CD4-positive, alpha-beta T cell (primary cell): ENCODE measurements at regions of chr10 and their contacts with region 1.

Region 1: GRCh38 chr10:6514844-6515780 is 65.0 kb downstream of the PRKCQ start:
- DNase-seq: no peak
- ATAC-seq: no peak
- H3K4me3 ChIP-seq: no peak overlapping the region
- H3K4me3 Mint-ChIP-seq: no peak overlapping the region
- H3K27ac ChIP-seq: no peak overlapping the region
- H3K27ac Mint-ChIP-seq: peak overlapping the region; percentile 76
- H3K4me1 ChIP-seq: peaks cover 52% of the 10 kb centered on the region
- H3K4me1 Mint-ChIP-seq: peaks cover 89% of the 10 kb centered on the region
- H3K27me3 ChIP-seq: no peaks in the 10 kb centered on the region
- H3K27me3 Mint-ChIP-seq: no peaks in the 10 kb centered on the region
- CTCF ChIP-seq: no peak

Region 2: DNA sequence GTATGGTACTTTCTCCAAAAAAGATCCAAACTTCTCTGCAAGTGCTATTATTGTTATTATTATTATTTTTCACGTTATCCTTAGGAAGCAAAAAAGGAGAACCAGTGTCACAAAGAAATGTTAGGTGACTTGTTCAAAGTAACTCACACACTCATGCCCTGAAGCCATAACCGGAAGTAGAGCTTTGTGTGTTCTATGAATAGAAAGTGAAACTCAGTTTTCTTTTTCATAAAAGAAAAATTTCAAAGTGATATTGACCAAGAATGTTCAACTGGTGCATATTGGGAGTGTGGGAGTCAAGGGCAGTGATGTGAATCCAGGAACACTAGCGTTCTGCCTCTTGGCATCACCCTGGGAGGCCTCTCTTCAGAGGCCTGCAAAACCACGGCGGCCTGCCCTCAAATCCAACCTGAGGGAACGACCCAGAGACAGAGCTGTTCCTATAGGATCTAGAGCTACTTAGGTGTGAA is 41.2 kb before region 1 on chr10:
- CTCF ChIA-PET with region 1: no interaction called
- POLR2A ChIA-PET with region 1: interaction called, 7 read pairs
- intact Hi-C with region 1: loop called in 1 of 2 experiments (anchors 5 kb)
- DNase-seq: peak in 6 of 14 experiments; percentile 25 to 85 (median 56)
- ATAC-seq: peak; percentile 75
- H3K4me3 ChIP-seq: peak overlapping the region; percentile 47
- H3K4me3 Mint-ChIP-seq: peak overlapping the region; percentile 83
- H3K27ac ChIP-seq: peak overlapping the region; percentile 69 to 75
- H3K27ac Mint-ChIP-seq: peak overlapping the region; percentile 95
- H3K4me1 ChIP-seq: peaks cover 23% of the 10 kb centered on the region
- H3K4me1 Mint-ChIP-seq: peaks cover 65% of the 10 kb centered on the region
- H3K27me3 ChIP-seq: no peaks in the 10 kb centered on the region
- H3K27me3 Mint-ChIP-seq: no peaks in the 10 kb centered on the region
- CTCF ChIP-seq: no peak

Region 3: GRCh38 chr10:6487920-6488319 is 27.2 kb before region 1 on chr10:
- CTCF ChIA-PET with region 1: no interaction called
- POLR2A ChIA-PET with region 1: no interaction called
- intact Hi-C with region 1: no loop called
- DNase-seq: no peak
- ATAC-seq: no peak
- H3K4me3 ChIP-seq: no peak overlapping the region
- H3K4me3 Mint-ChIP-seq: no peak overlapping the region
- H3K27ac ChIP-seq: no peak overlapping the region
- H3K27ac Mint-ChIP-seq: no peak overlapping the region
- H3K4me1 ChIP-seq: peaks cover 44% of the 10 kb centered on the region
- H3K4me1 Mint-ChIP-seq: peaks cover 33% of the 10 kb centered on the region
- H3K27me3 ChIP-seq: no peaks in the 10 kb centered on the region
- H3K27me3 Mint-ChIP-seq: no peaks in the 10 kb centered on the region
- CTCF ChIP-seq: no peak

Region 4: DNA sequence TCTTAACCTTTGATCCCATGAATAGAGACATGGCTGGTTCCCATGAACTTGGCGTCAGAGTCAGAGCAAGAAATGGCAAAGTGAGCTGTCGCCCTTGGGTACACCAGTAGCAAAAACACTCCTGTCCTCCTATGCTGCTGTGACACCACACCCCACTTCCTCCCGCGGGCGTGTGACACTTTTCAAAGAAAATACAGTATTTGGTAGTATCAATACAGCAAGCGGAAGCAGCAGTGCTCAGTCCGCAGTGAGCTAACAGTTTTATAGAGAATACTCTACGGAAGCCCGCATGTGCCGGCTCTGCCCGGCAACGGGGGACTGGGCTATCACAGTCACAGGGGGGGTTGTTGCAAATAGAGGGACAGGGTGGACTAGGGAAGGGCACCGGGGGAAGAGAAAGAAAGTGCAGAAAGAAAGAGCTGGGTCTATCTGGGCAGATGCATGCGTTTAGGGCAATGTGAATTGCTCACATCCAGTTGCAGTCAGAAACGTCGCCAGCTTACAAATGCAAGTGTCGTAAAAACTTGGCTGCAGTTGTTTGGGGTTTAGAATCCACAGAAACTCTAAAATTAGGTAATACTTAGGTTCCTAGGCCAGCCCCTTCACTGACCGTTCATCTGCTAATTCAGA is 15.2 kb after region 1 on chr10:
- CTCF ChIA-PET with region 1: interaction called, 14 read pairs
- POLR2A ChIA-PET with region 1: interaction called, 9 read pairs
- intact Hi-C with region 1: no loop called
- DNase-seq: peak; percentile 61 to 94 (median 77)
- ATAC-seq: peak; percentile 97
- H3K4me3 ChIP-seq: peak overlapping the region; percentile 48
- H3K4me3 Mint-ChIP-seq: peak overlapping the region; percentile 86
- H3K27ac ChIP-seq: peak overlapping the region; percentile 85 to 86
- H3K27ac Mint-ChIP-seq: peak overlapping the region; percentile 95
- H3K4me1 ChIP-seq: peaks cover 73% of the 10 kb centered on the region
- H3K4me1 Mint-ChIP-seq: peaks cover 85% of the 10 kb centered on the region
- H3K27me3 ChIP-seq: no peaks in the 10 kb centered on the region
- H3K27me3 Mint-ChIP-seq: no peaks in the 10 kb centered on the region
- CTCF ChIP-seq: no peak

Region 5: GRCh38 chr10:6563075-6563474 is 48.0 kb after region 1 on chr10:
- CTCF ChIA-PET with region 1: interaction called, 3 read pairs
- POLR2A ChIA-PET with region 1: interaction called, 7 read pairs
- intact Hi-C with region 1: loop called in 1 of 2 experiments (anchors 5 kb)
- DNase-seq: peak in 6 of 14 experiments; percentile 13 to 64 (median 50)
- ATAC-seq: peak; percentile 58
- H3K4me3 ChIP-seq: peak overlapping the region; percentile 21
- H3K4me3 Mint-ChIP-seq: peak overlapping the region; percentile 82
- H3K27ac ChIP-seq: peak overlapping the region; percentile 50 to 66
- H3K27ac Mint-ChIP-seq: peak overlapping the region; percentile 81
- H3K4me1 ChIP-seq: peaks cover 71% of the 10 kb centered on the region
- H3K4me1 Mint-ChIP-seq: peaks cover 90% of the 10 kb centered on the region
- H3K27me3 ChIP-seq: no peaks in the 10 kb centered on the region
- H3K27me3 Mint-ChIP-seq: no peaks in the 10 kb centered on the region
- CTCF ChIP-seq: no peak

Region 6: GRCh38 chr10:6601246-6601805 is 86.2 kb after region 1 on chr10:
- CTCF ChIA-PET with region 1: interaction called, 5 read pairs
- POLR2A ChIA-PET with region 1: interaction called, 4 read pairs
- intact Hi-C with region 1: loop called (anchors 2 to 5 kb)
- DNase-seq: peak in 8 of 14 experiments; percentile 36 to 60 (median 54)
- ATAC-seq: peak; percentile 67
- H3K4me3 ChIP-seq: no peak overlapping the region
- H3K4me3 Mint-ChIP-seq: peak overlapping the region; percentile 71
- H3K27ac ChIP-seq: no peak overlapping the region
- H3K27ac Mint-ChIP-seq: peak overlapping the region; percentile 83
- H3K4me1 ChIP-seq: peaks cover 35% of the 10 kb centered on the region
- H3K4me1 Mint-ChIP-seq: peaks cover 80% of the 10 kb centered on the region
- H3K27me3 ChIP-seq: no peaks in the 10 kb centered on the region
- H3K27me3 Mint-ChIP-seq: no peaks in the 10 kb centered on the region
- CTCF ChIP-seq: peak; percentile 79

Region 7: GRCh38 chr10:6607778-6608177 is 92.7 kb after region 1 on chr10:
- CTCF ChIA-PET with region 1: no interaction called
- POLR2A ChIA-PET with region 1: interaction called, 4 read pairs
- intact Hi-C with region 1: loop called in 1 of 2 experiments (anchors 5 kb)
- DNase-seq: no peak
- ATAC-seq: no peak
- H3K4me3 ChIP-seq: no peak overlapping the region
- H3K4me3 Mint-ChIP-seq: no peak overlapping the region
- H3K27ac ChIP-seq: peak overlapping the region in 1 of 2 donors; percentile 72
- H3K27ac Mint-ChIP-seq: peak overlapping the region; percentile 90
- H3K4me1 ChIP-seq: peaks cover 18% of the 10 kb centered on the region
- H3K4me1 Mint-ChIP-seq: peaks cover 80% of the 10 kb centered on the region
- H3K27me3 ChIP-seq: no peaks in the 10 kb centered on the region
- H3K27me3 Mint-ChIP-seq: no peaks in the 10 kb centered on the region
- CTCF ChIP-seq: no peak

Region 8: DNA sequence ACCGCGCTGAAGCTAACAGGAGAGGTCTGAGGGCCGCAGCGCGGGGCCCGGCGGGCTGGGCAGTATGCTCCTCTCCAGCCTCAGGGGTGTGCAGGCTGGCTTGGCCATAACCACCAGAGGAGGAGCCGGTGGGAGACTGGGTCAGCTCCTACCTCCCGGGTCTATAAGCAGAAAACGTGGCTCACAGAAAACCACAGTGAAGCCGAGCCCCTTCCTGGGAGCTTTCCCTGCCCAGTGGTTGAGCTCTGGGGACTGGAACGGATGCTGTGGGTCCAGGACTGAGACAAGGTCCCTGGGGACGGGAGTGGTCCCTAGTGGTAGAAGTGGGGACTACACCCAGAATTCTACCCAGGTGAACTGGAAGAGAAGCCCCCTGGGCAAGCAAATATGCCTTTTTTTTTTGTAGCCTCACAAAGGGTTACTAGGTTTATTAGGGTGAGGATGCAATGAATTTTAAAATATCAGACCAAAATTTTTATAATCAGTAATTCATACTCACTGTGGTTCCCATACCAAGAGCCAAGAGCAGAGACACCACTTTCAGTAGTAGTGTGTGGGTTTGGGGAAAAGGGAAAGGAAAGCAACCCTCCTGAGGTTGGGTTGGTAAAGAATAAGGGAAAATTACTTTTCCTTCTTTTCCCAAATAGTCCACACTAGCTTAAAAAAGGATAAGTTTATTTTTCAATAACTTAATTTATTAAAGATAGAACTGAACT is 132.9 kb after region 1 on chr10:
- CTCF ChIA-PET with region 1: interaction called, 4 read pairs
- POLR2A ChIA-PET with region 1: no interaction called
- intact Hi-C with region 1: loop called in 1 of 2 experiments (anchors 5 kb)
- DNase-seq: peak; percentile 41 to 82 (median 60)
- ATAC-seq: peak; percentile 97
- H3K4me3 ChIP-seq: no peak overlapping the region
- H3K4me3 Mint-ChIP-seq: no peak overlapping the region
- H3K27ac ChIP-seq: no peak overlapping the region
- H3K27ac Mint-ChIP-seq: no peak overlapping the region
- H3K4me1 ChIP-seq: peaks cover 16% of the 10 kb centered on the region
- H3K4me1 Mint-ChIP-seq: peaks cover 17% of the 10 kb centered on the region
- H3K27me3 ChIP-seq: no peaks in the 10 kb centered on the region
- H3K27me3 Mint-ChIP-seq: no peaks in the 10 kb centered on the region
- CTCF ChIP-seq: peak; percentile 93